ENCODE measurements at regions of chr9 and their contacts with region 1.

Region 1: GRCh38 chr9:114033397-114034103 is 44.5 kb downstream of the AMBP start:
- DNase-seq: no peak
- ATAC-seq: peak; percentile 57; the same call in 1 of the 2 replicates
- H3K4me3 ChIP-seq: no peak overlapping the region
- H3K27ac ChIP-seq: no peak overlapping the region
- H3K4me1 ChIP-seq: no peaks in the 10 kb centered on the region
- H3K27me3 ChIP-seq: no peaks in the 10 kb centered on the region
- CTCF ChIP-seq: peak; percentile 44
- POLR2A ChIP-seq: no peak
- RAD21 ChIP-seq: peak; percentile 72

Region 2: GRCh38 chr9:113541019-113541900 is 492.3 kb before region 1 on chr9:
- CTCF ChIA-PET with region 1: no interaction called
- POLR2A ChIA-PET with region 1: no interaction called
- dilution Hi-C with region 1: no loop called
- in situ Hi-C with region 1: no loop called
- intact Hi-C with region 1: no loop called
- DNase-seq: peak; percentile 55
- ATAC-seq: peak; percentile 78
- H3K4me3 ChIP-seq: no peak overlapping the region
- H3K27ac ChIP-seq: no peak overlapping the region; the same call in 1 of the 2 replicates
- H3K4me1 ChIP-seq: no peaks in the 10 kb centered on the region
- H3K27me3 ChIP-seq: no peaks in the 10 kb centered on the region
- CTCF ChIP-seq: no peak
- POLR2A ChIP-seq: no peak
- RAD21 ChIP-seq: no peak

Region 3: GRCh38 chr9:113682297-113682771 is 351.2 kb before region 1 on chr9:
- CTCF ChIA-PET with region 1: no interaction called
- POLR2A ChIA-PET with region 1: no interaction called
- dilution Hi-C with region 1: no loop called
- in situ Hi-C with region 1: no loop called
- intact Hi-C with region 1: loop called (anchors 5 kb)
- DNase-seq: peak; percentile 90
- ATAC-seq: peak; percentile 89
- H3K4me3 ChIP-seq: no peak overlapping the region
- H3K27ac ChIP-seq: no peak overlapping the region
- H3K4me1 ChIP-seq: no peaks in the 10 kb centered on the region
- H3K27me3 ChIP-seq: peaks cover 19% of the 10 kb centered on the region
- CTCF ChIP-seq: peak; percentile 83
- POLR2A ChIP-seq: 0 out of 2 replicates have a peak, but pooled peaks have one; percentile 30
- RAD21 ChIP-seq: peak; percentile 71

Region 4: DNA sequence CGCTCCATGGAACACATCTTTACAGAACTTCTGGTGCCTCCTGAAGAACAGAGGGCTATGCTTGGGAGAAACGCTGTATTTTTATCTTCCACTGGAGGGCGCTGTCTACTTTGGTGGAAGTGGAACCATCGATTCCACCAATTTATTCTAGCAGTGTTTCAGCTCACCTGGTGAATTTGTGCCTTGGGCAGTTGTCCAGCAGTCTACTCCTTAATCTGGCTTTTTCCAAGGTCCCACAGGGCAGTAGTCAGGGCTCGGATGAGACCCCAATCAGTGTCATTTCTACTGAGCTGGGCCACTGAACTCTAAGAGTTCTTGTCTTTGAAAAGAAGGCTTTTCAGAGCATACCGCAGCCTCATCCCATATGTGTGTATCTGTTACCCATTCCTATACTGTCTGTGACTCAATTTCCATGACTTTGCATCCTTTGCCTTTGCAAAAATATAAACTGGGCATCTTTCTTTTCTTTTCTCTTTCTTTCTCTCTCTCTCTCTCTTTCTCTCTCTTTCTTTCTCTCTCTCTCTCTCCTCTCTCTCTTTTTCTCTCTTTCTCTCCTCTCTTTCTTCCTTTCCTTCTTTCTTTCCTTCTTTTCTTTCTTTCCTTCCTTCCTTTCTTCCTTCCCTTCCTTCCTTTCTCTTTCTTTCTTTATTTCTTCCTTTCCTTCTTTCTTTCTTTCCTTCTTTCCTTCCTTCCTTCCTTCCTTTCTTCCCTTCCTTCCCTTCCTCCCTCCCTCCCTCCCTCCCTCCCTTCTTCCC is 295.9 kb before region 1 on chr9:
- CTCF ChIA-PET with region 1: no interaction called
- POLR2A ChIA-PET with region 1: no interaction called
- dilution Hi-C with region 1: no loop called
- in situ Hi-C with region 1: no loop called
- intact Hi-C with region 1: loop called (anchors 2 kb)
- DNase-seq: peak; percentile 51
- ATAC-seq: peak; percentile 68
- H3K4me3 ChIP-seq: no peak overlapping the region
- H3K27ac ChIP-seq: no peak overlapping the region
- H3K4me1 ChIP-seq: no peaks in the 10 kb centered on the region
- H3K27me3 ChIP-seq: peaks cover 25% of the 10 kb centered on the region
- CTCF ChIP-seq: peak; percentile 78
- POLR2A ChIP-seq: no peak
- RAD21 ChIP-seq: peak; percentile 74

Region 5: GRCh38 chr9:113807173-113808061 is 226.1 kb before region 1 on chr9:
- CTCF ChIA-PET with region 1: no interaction called
- POLR2A ChIA-PET with region 1: no interaction called
- dilution Hi-C with region 1: no loop called
- in situ Hi-C with region 1: no loop called
- intact Hi-C with region 1: loop called (anchors 1 kb)
- DNase-seq: peak; percentile 60
- ATAC-seq: peak; percentile 95
- H3K4me3 ChIP-seq: no peak overlapping the region
- H3K27ac ChIP-seq: no peak overlapping the region
- H3K4me1 ChIP-seq: no peaks in the 10 kb centered on the region
- H3K27me3 ChIP-seq: peaks cover 4% of the 10 kb centered on the region; the same call in 1 of the 2 replicates
- CTCF ChIP-seq: peak; percentile 83
- POLR2A ChIP-seq: no peak
- RAD21 ChIP-seq: peak; percentile 84

Region 6: GRCh38 chr9:113913426-113914195 is 119.9 kb before region 1 on chr9:
- CTCF ChIA-PET with region 1: no interaction called
- POLR2A ChIA-PET with region 1: no interaction called
- dilution Hi-C with region 1: no loop called
- in situ Hi-C with region 1: no loop called
- intact Hi-C with region 1: no loop called
- DNase-seq: peak; percentile 28
- ATAC-seq: peak; percentile 56
- H3K4me3 ChIP-seq: no peak overlapping the region
- H3K27ac ChIP-seq: no peak overlapping the region
- H3K4me1 ChIP-seq: peaks cover 3% of the 10 kb centered on the region; the same call in 1 of the 2 replicates
- H3K27me3 ChIP-seq: no peaks in the 10 kb centered on the region
- CTCF ChIP-seq: no peak
- POLR2A ChIP-seq: no peak
- RAD21 ChIP-seq: no peak

Region 7: DNA sequence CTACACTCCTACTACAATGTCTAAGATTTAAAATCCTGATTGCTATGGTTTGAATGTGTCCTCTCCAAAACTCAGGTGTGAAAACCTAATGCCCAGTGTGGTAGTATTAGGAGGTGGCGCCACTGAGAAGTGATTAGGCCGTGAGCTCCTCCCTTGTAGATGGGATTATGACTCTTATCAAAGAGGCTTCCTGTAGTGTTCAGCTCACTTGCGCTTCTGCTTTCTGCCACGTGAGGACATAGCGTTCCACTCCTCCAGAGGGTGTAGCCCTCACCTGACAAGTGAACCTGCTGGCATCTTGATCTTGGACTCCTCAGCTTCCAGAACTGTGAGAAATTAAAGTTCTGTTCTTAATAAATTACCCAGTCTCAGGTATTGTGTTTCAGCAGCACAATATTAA is 504.7 kb after region 1 on chr9:
- CTCF ChIA-PET with region 1: no interaction called
- POLR2A ChIA-PET with region 1: no interaction called
- dilution Hi-C with region 1: no loop called
- in situ Hi-C with region 1: no loop called
- intact Hi-C with region 1: no loop called
- DNase-seq: no peak
- ATAC-seq: no peak
- H3K4me3 ChIP-seq: no peak overlapping the region
- H3K27ac ChIP-seq: no peak overlapping the region
- H3K4me1 ChIP-seq: no peaks in the 10 kb centered on the region
- H3K27me3 ChIP-seq: peaks cover 13% of the 10 kb centered on the region
- CTCF ChIP-seq: no peak
- POLR2A ChIP-seq: no peak
- RAD21 ChIP-seq: 0 out of 2 replicates have a peak, but pooled peaks have one; percentile 5